HepG2 (cell line): ENCODE measurements at regions of chr15 and their contacts with region 1.

Region 1: GRCh38 chr15:78108299-78109084 is 16.1 kb downstream of the SH2D7 start:
- DNase-seq: peak; percentile 85
- ATAC-seq: peak; percentile 89
- H3K4me3 ChIP-seq: no peak overlapping the region
- H3K27ac ChIP-seq: no peak overlapping the region
- H3K4me1 ChIP-seq: peaks cover 31% of the 10 kb centered on the region
- H3K27me3 ChIP-seq: peaks cover 0 to 3% of the 10 kb centered on the region in 2 experiments; a peak in 1 of 5 replicates
- CTCF ChIP-seq: peak; percentile 95
- EP300 ChIP-seq: no peak
- POLR2A ChIP-seq: no peak
- RAD21 ChIP-seq: peak; percentile 97

Region 2: DNA sequence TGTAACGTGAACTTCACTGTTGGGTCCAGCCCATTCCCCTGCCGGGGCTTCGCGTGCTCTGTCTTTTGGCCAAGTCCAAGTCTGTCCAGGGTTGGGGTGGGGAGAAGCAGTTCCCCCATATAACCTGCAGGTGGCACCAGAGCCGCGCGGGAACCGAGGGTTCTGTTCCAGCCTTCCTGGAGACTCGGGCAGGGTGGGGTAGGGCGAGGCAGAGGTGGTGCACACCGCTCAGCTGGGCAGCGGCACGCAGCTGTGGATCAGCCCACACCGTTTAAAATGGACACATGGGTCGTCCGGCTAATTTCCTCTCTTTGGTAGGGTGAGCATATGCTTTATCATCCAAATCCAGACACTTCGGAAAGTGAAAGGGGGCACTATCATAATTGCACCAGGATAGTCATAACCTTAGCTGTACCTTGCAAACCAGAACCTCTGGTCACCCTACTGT is 149.0 kb before region 1 on chr15:
- CTCF ChIA-PET with region 1: interaction called, 19 read pairs
- POLR2A ChIA-PET with region 1: no interaction called
- in situ Hi-C with region 1: no loop called
- intact Hi-C with region 1: no loop called
- DNase-seq: peak; percentile 48
- ATAC-seq: peak; percentile 98
- H3K4me3 ChIP-seq: no peak overlapping the region; a peak in 1 of 6 replicates
- H3K27ac ChIP-seq: no peak overlapping the region
- H3K4me1 ChIP-seq: peaks cover 18% of the 10 kb centered on the region
- H3K27me3 ChIP-seq: no peaks in the 10 kb centered on the region
- CTCF ChIP-seq: peak; percentile 96
- EP300 ChIP-seq: no peak
- POLR2A ChIP-seq: no peak
- RAD21 ChIP-seq: peak; percentile 89

Region 3: GRCh38 chr15:77966540-77967290 is 141.8 kb before region 1 on chr15:
- CTCF ChIA-PET with region 1: interaction called, 22 read pairs
- POLR2A ChIA-PET with region 1: no interaction called
- in situ Hi-C with region 1: no loop called
- intact Hi-C with region 1: loop called (anchors 1 kb)
- DNase-seq: peak; percentile 32
- ATAC-seq: peak; percentile 86
- H3K4me3 ChIP-seq: no peak overlapping the region
- H3K27ac ChIP-seq: no peak overlapping the region
- H3K4me1 ChIP-seq: 0 out of 2 replicates have a peak, but pooled peaks cover 7% of the 10 kb centered on the region
- H3K27me3 ChIP-seq: no peaks in the 10 kb centered on the region
- CTCF ChIP-seq: peak; percentile 81
- EP300 ChIP-seq: no peak
- POLR2A ChIP-seq: no peak
- RAD21 ChIP-seq: peak; percentile 69

Region 4: DNA sequence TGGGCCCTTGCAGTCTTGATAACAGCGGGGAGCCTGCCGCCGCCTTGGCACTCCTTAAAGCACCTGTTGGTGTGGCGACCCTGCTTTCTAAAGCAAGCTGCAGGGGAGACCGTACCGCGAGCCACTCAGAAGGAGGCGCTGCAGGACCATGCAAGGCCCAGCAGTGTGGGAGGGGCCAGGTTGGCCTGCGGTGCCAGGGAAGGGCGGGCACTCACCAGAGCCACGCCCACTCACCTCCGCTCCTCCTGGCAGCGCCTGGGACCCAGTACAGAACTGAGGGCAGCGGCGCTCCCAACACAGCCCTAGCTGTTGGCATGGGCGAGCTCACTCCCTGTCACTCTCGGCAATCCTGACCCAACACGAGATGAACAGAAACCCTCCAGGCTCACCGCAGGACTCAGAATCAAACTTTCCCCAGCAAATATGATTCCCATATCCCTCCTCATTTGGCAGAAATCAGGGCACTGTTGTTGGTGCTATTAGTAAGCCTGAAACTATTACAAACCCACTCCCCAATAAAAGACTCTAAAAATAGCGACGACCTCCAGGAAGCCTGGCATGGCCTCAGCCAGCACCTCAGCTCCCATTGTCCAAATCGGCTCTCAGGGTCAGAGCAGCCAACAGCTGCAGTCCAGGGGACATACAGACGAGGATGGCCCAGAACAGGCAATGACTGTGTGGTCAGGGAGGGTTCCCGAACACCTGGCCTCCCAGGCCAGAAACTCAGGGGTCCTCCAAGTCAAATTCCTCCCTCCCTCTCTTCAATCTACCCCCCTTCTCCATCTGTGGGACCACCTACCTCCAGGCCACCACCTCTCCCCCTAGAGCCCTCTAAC is 108.2 kb before region 1 on chr15:
- CTCF ChIA-PET with region 1: interaction called, 29 read pairs
- POLR2A ChIA-PET with region 1: no interaction called
- in situ Hi-C with region 1: loop called (anchors 5 kb)
- intact Hi-C with region 1: loop called (anchors 1 kb)
- DNase-seq: peak; percentile 62
- ATAC-seq: peak; percentile 92
- H3K4me3 ChIP-seq: no peak overlapping the region
- H3K27ac ChIP-seq: no peak overlapping the region
- H3K4me1 ChIP-seq: no peaks in the 10 kb centered on the region
- H3K27me3 ChIP-seq: no peaks in the 10 kb centered on the region
- CTCF ChIP-seq: peak; percentile 94
- EP300 ChIP-seq: no peak
- POLR2A ChIP-seq: no peak
- RAD21 ChIP-seq: peak; percentile 93

Region 5: DNA sequence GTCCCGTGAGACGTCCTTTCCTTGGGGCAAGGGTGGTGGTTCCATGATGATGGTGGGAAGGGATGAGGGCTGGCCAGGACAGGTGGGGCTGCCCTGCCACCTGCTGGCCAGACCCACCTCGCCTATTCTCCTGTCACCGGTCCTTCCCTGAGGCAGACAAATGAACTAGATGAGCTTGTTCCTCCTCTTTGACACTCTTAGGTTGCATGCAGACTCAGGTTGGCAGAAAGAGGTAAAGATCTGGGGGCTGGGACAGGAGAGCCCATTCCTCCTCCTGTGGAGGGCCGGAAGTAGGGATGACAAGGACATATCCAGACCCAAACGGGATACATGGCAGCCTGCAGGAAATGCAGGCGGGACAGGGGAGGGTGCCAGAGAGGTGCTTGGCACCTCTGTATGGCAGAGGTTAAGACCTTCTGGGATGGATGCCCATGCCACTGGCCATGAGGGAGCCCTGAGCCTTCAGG is 87.3 kb after region 1 on chr15:
- CTCF ChIA-PET with region 1: interaction called, 43 read pairs
- POLR2A ChIA-PET with region 1: no interaction called
- in situ Hi-C with region 1: loop called (anchors 5 kb)
- intact Hi-C with region 1: no loop called
- DNase-seq: peak; percentile 10
- ATAC-seq: peak; percentile 91
- H3K4me3 ChIP-seq: no peak overlapping the region
- H3K27ac ChIP-seq: no peak overlapping the region
- H3K4me1 ChIP-seq: no peaks in the 10 kb centered on the region
- H3K27me3 ChIP-seq: peaks cover 0 to 6% of the 10 kb centered on the region in 2 experiments; a peak in 2 of 5 replicates
- CTCF ChIP-seq: peak; percentile 91
- EP300 ChIP-seq: no peak
- POLR2A ChIP-seq: no peak
- RAD21 ChIP-seq: peak; percentile 87

Region 6: GRCh38 chr15:78241007-78241406 is 132.5 kb after region 1 on chr15:
- CTCF ChIA-PET with region 1: interaction called, 14 read pairs
- POLR2A ChIA-PET with region 1: no interaction called
- in situ Hi-C with region 1: loop called (anchors 5 kb)
- intact Hi-C with region 1: loop called (anchors 1 kb)
- DNase-seq: peak; percentile 49
- ATAC-seq: peak; percentile 93
- H3K4me3 ChIP-seq: no peak overlapping the region
- H3K27ac ChIP-seq: no peak overlapping the region
- H3K4me1 ChIP-seq: peaks cover 32% of the 10 kb centered on the region
- H3K27me3 ChIP-seq: peaks cover 0 to 11% of the 10 kb centered on the region in 2 experiments; a peak in 1 of 5 replicates
- CTCF ChIP-seq: peak; percentile 92
- EP300 ChIP-seq: no peak
- POLR2A ChIP-seq: no peak
- RAD21 ChIP-seq: peak; percentile 77

Region 7: DNA sequence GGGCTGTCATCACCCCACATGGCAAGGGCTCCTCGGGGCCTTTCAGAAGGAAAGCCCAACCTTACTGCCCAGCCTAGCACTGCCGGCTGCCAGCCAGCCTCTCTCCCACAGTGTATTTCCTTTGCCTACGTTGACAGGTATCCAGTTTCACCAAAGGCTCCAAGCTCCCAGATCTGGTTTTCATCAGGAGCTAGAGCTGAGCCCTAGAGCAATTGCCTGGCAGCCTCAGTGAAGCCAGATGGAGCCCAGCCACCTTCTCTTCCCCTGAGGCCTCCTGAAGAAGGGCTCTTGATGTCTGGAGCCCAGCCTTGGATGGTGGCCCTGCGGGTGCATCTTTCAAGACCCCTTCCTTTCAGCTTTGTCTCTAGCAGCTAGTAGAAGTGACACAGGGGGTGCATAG is 251.9 kb after region 1 on chr15:
- CTCF ChIA-PET with region 1: no interaction called
- POLR2A ChIA-PET with region 1: no interaction called
- in situ Hi-C with region 1: no loop called
- intact Hi-C with region 1: no loop called
- DNase-seq: no peak
- ATAC-seq: no peak
- H3K4me3 ChIP-seq: no peak overlapping the region
- H3K27ac ChIP-seq: no peak overlapping the region
- H3K4me1 ChIP-seq: peaks cover 10% of the 10 kb centered on the region; the same call in 1 of the 2 replicates
- H3K27me3 ChIP-seq: peaks cover 2 to 13% of the 10 kb centered on the region in 2 experiments; a peak in 4 of 5 replicates
- CTCF ChIP-seq: no peak
- EP300 ChIP-seq: no peak
- POLR2A ChIP-seq: no peak
- RAD21 ChIP-seq: no peak